ENCODE measurements at regions of chr12 and their contacts with region 1.

Region 1: DNA sequence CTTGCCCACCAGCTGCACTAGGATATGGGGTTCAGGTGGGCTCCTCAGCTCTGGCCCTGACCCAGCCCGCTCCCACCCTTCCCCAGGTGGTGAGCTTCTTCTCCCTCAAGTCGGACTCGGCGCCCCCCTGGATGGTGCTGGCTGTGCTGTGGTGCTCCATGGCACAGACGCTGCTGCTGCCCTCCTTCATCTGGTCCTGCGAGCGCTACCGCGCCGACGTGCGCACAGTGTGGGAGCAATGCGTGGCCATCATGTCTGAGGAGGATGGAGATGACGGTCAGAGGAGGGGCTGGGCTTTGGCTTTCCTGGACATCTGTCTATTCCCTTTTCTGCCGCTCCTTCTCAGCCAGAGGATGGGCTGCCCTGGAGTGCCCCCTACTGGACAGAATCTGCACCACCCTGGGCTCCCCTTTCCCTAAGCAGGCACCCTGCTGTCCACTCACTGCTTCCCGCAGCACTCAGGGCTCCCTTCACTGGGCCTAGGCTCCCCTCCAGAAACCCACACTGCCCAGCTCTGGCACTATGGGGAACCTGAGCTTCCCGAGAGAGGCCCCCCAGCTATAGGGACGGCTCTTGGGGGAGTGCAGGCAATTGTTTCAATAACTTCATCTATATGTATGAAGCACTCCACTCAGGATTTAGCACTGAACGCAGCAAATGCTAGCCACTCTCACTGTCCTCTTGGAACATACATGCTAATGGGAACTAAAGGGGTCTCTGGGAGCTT is 2.6 kb upstream of the P3H3 start:
- DNase-seq: no peak
- ATAC-seq: peak; percentile 88
- H3K4me3 ChIP-seq: no peak overlapping the region
- H3K27ac ChIP-seq: no peak overlapping the region
- H3K4me1 ChIP-seq: peaks cover 4% of the 10 kb centered on the region
- H3K27me3 ChIP-seq: peaks cover 27 to 35% of the 10 kb centered on the region in 2 experiments
- CTCF ChIP-seq: peak; percentile 90 to 96 (median 92)
- EP300 ChIP-seq: no peak
- POLR2A ChIP-seq: no peak
- RAD21 ChIP-seq: peak; percentile 86

Region 2: DNA sequence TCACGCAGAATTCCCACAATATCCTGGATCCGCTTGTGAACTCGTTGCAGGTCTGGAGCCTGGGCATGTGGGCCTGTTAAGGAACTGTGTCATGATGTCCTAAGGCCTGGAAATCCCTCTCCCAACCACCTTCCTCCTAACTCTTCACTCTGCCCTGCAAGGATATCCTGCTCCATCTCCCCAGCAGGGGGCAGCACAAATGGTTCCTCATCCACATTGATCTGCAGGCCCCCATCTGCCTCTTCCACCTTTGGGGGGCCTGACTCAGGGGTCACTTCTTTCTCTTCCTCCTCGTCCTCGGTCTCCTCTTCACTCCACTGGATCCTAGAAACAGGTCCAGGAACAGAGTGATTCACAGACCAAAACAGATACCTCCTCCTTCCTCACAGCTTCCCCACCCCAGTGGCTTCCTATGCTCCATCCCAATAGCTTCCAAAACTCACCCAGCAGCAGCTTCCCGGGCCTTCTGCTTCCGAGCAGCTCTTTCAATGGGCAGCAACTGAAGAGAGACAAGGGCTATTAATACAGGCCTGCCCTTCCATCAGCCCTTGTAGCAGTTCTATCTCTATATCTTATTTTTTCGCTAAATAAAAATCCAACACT is 262.0 kb before region 1 on chr12:
- CTCF ChIA-PET with region 1: interaction called, 12 read pairs
- POLR2A ChIA-PET with region 1: no interaction called
- RAD21 ChIA-PET with region 1: no interaction called
- SMC1A ChIA-PET with region 1: no interaction called
- in situ Hi-C with region 1: no loop called
- intact Hi-C with region 1: no loop called
- DNase-seq: no peak
- ATAC-seq: peak; percentile 54
- H3K4me3 ChIP-seq: no peak overlapping the region
- H3K27ac ChIP-seq: no peak overlapping the region
- H3K4me1 ChIP-seq: peaks cover 4% of the 10 kb centered on the region; the same call in 1 of the 2 replicates
- H3K27me3 ChIP-seq: no peaks in the 10 kb centered on the region
- CTCF ChIP-seq: peak; percentile 69 to 84 (median 73)
- EP300 ChIP-seq: no peak
- POLR2A ChIP-seq: no peak; the same call in 1 of the 2 replicates
- RAD21 ChIP-seq: peak; percentile 42

Region 3: GRCh38 chr12:6735448-6736191 is 89.9 kb before region 1 on chr12:
- CTCF ChIA-PET with region 1: interaction called, 4 read pairs
- POLR2A ChIA-PET with region 1: no interaction called
- RAD21 ChIA-PET with region 1: no interaction called
- SMC1A ChIA-PET with region 1: interaction called, 5 read pairs
- in situ Hi-C with region 1: no loop called
- intact Hi-C with region 1: loop called (anchors 5 kb)
- DNase-seq: no peak
- ATAC-seq: peak; percentile 91
- H3K4me3 ChIP-seq: no peak overlapping the region
- H3K27ac ChIP-seq: 0 out of 2 replicates have a peak overlapping the region, but pooled peaks have one; percentile 60
- H3K4me1 ChIP-seq: peaks cover 5% of the 10 kb centered on the region; the same call in 1 of the 2 replicates
- H3K27me3 ChIP-seq: no peaks in the 10 kb centered on the region
- CTCF ChIP-seq: peak; percentile 59 to 64 (median 61)
- EP300 ChIP-seq: no peak
- POLR2A ChIP-seq: no peak
- RAD21 ChIP-seq: peak; percentile 67

Region 4: GRCh38 chr12:6771091-6771495 is 54.5 kb before region 1 on chr12:
- CTCF ChIA-PET with region 1: interaction called, 13 read pairs
- POLR2A ChIA-PET with region 1: interaction called, 3 read pairs
- RAD21 ChIA-PET with region 1: interaction called, 8 read pairs
- SMC1A ChIA-PET with region 1: no interaction called
- in situ Hi-C with region 1: no loop called
- intact Hi-C with region 1: no loop called
- DNase-seq: no peak
- ATAC-seq: no peak
- H3K4me3 ChIP-seq: no peak overlapping the region
- H3K27ac ChIP-seq: no peak overlapping the region
- H3K4me1 ChIP-seq: peaks cover 46% of the 10 kb centered on the region
- H3K27me3 ChIP-seq: no peaks in the 10 kb centered on the region
- CTCF ChIP-seq: no peak
- EP300 ChIP-seq: no peak
- POLR2A ChIP-seq: no peak
- RAD21 ChIP-seq: no peak

Region 5: GRCh38 chr12:6810758-6811157 is 14.8 kb before region 1 on chr12:
- CTCF ChIA-PET with region 1: interaction called, 12 read pairs
- POLR2A ChIA-PET with region 1: interaction called, 3 read pairs
- RAD21 ChIA-PET with region 1: interaction called, 3 read pairs
- SMC1A ChIA-PET with region 1: interaction called, 6 read pairs
- in situ Hi-C with region 1: no loop called
- intact Hi-C with region 1: no loop called
- DNase-seq: no peak
- ATAC-seq: no peak
- H3K4me3 ChIP-seq: no peak overlapping the region
- H3K27ac ChIP-seq: no peak overlapping the region
- H3K4me1 ChIP-seq: 0 out of 2 replicates have a peak, but pooled peaks cover 4% of the 10 kb centered on the region
- H3K27me3 ChIP-seq: peaks cover 0 to 2% of the 10 kb centered on the region in 2 experiments; a peak in 3 of 4 replicates
- CTCF ChIP-seq: no peak
- EP300 ChIP-seq: no peak
- POLR2A ChIP-seq: no peak
- RAD21 ChIP-seq: no peak

Measured in GM12878 (cell line).